ENCODE measurements at regions of chr3 and their contacts with region 1.

Region 1: DNA sequence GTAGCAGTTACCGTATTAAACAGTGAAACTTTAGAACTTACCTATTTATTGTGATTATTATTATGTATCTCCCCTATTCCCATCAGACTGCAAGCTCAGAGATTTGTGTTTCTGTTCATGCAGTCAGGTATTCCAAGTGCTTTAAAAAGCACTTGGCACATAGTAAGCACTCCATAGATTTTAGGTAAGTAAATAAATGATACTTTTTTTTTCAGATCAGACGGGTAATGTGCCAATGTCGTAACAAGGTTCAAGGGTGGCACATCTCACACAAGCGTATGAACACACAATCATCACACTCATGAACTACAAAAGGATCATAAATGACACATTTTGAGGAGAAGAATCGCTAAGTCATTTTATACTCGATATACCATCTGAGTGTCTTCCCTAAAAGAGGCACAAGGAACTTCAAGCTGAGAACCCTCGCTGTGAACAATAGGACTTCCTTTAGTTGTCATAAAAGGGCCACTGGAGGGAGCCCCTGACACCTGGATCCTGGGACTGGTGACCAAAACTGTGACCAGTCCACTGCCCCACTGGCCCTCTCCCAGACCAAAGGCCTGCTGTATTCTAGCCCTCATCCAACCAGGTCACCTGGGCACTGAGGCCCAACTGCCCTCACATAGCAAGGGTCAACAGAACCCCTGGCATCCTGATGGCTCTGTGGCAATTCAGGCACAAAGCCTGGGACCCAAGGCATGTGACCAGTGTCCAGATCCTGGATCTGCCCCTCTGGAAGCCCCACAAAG is 32.1 kb downstream of the KIF9 start:
- DNase-seq: no peak
- H3K4me3 ChIP-seq: no peak overlapping the region
- H3K27ac ChIP-seq: no peak overlapping the region
- H3K4me1 ChIP-seq: no peaks in the 10 kb centered on the region; a peak in 1 of 7 replicates
- H3K27me3 ChIP-seq: no peaks in the 10 kb centered on the region
- CTCF ChIP-seq: peak; percentile 7 to 53 (median 49)
- EP300 ChIP-seq: no peak
- POLR2A ChIP-seq: no peak
- RAD21 ChIP-seq: peak; percentile 56 to 70

Region 2: DNA sequence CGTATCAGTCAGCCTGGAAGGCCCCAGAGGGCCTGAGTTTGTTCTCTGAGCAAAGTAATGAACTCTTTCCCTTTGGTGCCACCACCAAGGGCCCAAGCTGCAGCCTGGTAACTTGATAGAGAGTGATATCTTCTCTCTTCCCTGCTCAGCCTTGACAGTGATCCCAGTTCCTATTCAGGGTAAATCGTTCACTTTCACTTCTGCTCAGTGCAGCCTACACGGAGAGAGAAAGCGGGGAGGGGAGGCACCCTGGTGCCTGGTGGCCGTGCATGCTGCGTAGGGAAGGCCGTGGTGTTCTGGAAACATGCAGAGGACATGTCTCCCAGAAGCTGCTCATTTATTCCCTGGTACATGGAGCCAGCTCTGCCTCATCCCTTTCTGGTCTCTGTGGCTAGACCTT is 22.8 kb before region 1 on chr3:
- CTCF ChIA-PET with region 1: interaction called, 11 read pairs
- POLR2A ChIA-PET with region 1: interaction called, 3 read pairs
- DNase-seq: no peak
- H3K4me3 ChIP-seq: no peak overlapping the region
- H3K27ac ChIP-seq: no peak overlapping the region
- H3K4me1 ChIP-seq: peaks cover 0 to 4% (median 0%) of the 10 kb centered on the region in 4 experiments; a peak in 1 of 7 replicates
- H3K27me3 ChIP-seq: no peaks in the 10 kb centered on the region
- CTCF ChIP-seq: no peak
- EP300 ChIP-seq: no peak
- POLR2A ChIP-seq: no peak
- RAD21 ChIP-seq: no peak

Region 3: DNA sequence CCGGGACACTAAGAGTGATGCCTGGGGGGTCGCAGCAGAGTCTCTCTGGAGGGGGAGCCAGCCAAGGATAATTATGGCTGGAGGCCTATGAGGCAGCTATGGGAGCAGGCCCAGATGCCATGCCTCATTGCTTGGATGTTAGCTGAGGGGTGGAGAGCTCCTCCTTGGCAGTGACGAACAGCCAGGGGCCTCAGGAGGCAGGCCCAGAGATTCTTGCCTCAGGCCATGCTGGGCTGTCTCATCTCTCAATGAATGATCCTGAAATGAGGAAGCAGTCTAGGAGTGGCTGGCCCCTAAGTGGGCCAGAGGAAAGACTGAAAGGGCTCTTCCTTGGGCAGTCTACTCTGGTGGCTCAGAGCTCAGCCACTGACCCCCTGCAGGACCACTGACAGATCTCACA is 10.8 kb after region 1 on chr3:
- CTCF ChIA-PET with region 1: interaction called, 12 read pairs
- POLR2A ChIA-PET with region 1: interaction called, 3 read pairs
- DNase-seq: no peak
- H3K4me3 ChIP-seq: no peak overlapping the region
- H3K27ac ChIP-seq: no peak overlapping the region
- H3K4me1 ChIP-seq: peaks cover 0 to 12% (median 5%) of the 10 kb centered on the region in 4 experiments; a peak in 6 of 7 replicates
- H3K27me3 ChIP-seq: no peaks in the 10 kb centered on the region; a peak in 1 of 7 replicates
- CTCF ChIP-seq: no peak
- EP300 ChIP-seq: no peak
- POLR2A ChIP-seq: no peak
- RAD21 ChIP-seq: no peak

Region 4: DNA sequence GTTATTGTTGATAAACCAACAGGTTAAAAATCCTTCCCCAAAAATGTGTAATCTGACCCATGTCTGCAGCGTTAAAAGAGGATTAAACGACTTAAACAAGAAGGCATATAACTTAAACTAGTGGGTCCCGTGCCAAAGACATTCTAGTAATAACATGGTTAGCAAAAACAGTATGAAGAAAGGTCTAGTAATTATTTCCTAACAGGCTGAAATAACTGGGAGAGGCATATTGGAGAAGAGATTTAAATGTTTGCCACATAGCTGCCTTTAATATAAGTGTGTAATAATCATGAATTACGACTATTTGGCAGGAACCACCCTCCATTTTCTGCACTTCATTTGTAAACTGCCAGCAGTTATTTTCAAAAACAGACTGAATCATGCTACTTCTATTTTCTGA is 395.9 kb after region 1 on chr3:
- CTCF ChIA-PET with region 1: no interaction called
- POLR2A ChIA-PET with region 1: no interaction called
- DNase-seq: no peak
- H3K4me3 ChIP-seq: no peak overlapping the region
- H3K27ac ChIP-seq: no peak overlapping the region
- H3K4me1 ChIP-seq: no peaks in the 10 kb centered on the region
- H3K27me3 ChIP-seq: peaks cover 0 to 2% (median 0%) of the 10 kb centered on the region in 4 experiments; a peak in 1 of 7 replicates
- CTCF ChIP-seq: no peak
- EP300 ChIP-seq: no peak
- POLR2A ChIP-seq: no peak
- RAD21 ChIP-seq: no peak

Measured in H1 (cell line).